ENCODE measurements at regions of chr5 and their contacts with region 1.

Region 1: DNA sequence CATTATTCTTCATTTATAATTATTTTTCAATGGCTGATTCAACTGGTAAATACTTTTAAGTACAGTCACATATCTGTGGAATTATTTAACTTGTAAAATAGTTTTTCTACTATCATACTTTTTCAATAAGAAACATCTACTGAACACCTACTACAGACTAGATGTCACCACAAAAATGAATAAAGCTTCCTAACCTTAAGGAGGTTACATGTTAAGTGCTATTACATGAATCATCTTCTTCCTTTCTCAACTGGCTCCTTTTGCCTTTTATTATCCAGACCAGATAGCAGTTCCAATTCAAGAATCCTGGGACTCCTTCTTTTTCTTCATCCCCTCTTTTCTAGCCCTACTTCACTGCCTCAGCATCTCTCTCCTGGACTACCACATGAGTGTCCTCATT is 4.7 kb downstream of the PGGT1B start:
- DNase-seq: no peak
- H3K4me3 ChIP-seq: no peak overlapping the region
- H3K27ac ChIP-seq: no peak overlapping the region
- H3K4me1 ChIP-seq: peaks cover 17% of the 10 kb centered on the region
- H3K27me3 ChIP-seq: no peaks in the 10 kb centered on the region
- CTCF ChIP-seq: no peak

Region 2: GRCh38 chr5:115098041-115098702 is 159.8 kb before region 1 on chr5:
- dilution Hi-C with region 1: loop called (anchors 10 kb)
- DNase-seq: no peak
- H3K4me3 ChIP-seq: no peak overlapping the region
- H3K27ac ChIP-seq: no peak overlapping the region
- H3K4me1 ChIP-seq: peaks cover 20% of the 10 kb centered on the region
- H3K27me3 ChIP-seq: no peaks in the 10 kb centered on the region
- CTCF ChIP-seq: peak; percentile 61 to 77 (median 76)